T-cell (primary cell): ENCODE measurements at regions of chr15 and their contacts with region 1.

Region 1: DNA sequence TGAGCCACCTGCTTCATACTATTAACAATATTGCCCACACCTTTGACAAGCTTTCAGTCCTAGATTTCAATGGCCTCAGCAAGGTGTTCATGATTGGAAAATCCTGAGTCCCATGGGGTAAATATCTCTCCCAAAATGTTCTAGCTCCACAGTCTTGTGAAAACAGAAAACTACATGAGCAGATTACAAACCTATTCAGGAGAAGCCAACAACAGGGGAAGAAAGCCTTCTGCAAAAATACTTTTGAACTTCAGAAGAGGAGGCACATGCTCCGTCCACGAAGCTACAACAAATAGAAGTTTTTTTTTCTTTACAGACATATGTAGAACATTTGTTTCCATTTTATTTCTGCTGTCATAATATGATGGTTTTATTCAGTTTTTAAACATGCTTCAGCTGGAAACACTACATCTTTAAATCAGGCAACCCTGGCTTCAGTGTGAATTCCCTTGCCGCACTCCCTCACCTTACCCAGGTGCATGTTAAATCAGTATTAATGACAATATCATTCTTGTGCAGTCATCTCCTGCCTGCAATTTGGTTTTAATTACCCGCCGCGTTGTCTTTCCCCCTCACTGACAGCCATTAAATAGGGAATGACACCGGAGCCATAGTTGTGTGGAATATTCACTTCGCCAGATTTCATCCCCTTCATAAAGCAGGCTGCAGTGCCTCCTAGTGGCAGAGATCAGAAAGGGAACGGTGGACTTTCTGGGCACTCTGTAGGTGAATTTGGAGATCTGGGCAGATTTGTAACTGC is 725.5 kb upstream of the ARRDC4 start:
- DNase-seq: peak in 10 of 35 experiments; percentile 1 to 38 (median 5)
- ATAC-seq: no peak
- H3K4me3 ChIP-seq: no peak overlapping the region
- H3K4me3 Mint-ChIP-seq: no peak overlapping the region
- H3K27ac ChIP-seq: no peak overlapping the region
- H3K27ac Mint-ChIP-seq: no peak overlapping the region
- H3K4me1 ChIP-seq: no peaks in the 10 kb centered on the region
- H3K4me1 Mint-ChIP-seq: peaks cover 0 to 2% (median 0%) of the 10 kb centered on the region in 3 donors
- H3K27me3 ChIP-seq: no peaks in the 10 kb centered on the region
- H3K27me3 Mint-ChIP-seq: peaks cover 5 to 7% of the 10 kb centered on the region in 2 donors

Region 2: DNA sequence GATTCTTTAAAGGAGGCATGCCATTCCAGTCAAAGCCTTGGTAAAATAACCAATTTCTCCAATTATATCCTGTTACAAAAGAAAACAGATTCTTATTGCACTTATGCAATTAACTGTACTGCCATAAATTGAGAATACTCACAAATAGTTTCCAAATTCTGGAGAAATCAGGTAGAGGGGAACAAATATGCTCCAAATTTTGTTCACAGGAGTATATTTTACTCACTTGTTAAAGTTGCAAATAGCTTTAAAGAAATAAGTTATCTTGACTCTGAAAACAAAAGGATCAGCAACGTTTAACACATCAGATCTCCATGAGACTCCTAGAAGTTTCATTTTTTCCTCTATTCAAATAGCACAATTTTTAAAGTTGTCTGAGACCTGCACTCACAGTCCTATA is 13.3 kb after region 1 on chr15:
- CTCF ChIA-PET with region 1: no interaction called
- POLR2A ChIA-PET with region 1: interaction called in 1 of 2 experiments, 17 read pairs
- DNase-seq: no peak
- ATAC-seq: no peak
- H3K4me3 ChIP-seq: no peak overlapping the region
- H3K4me3 Mint-ChIP-seq: no peak overlapping the region
- H3K27ac ChIP-seq: no peak overlapping the region
- H3K27ac Mint-ChIP-seq: no peak overlapping the region
- H3K4me1 ChIP-seq: no peaks in the 10 kb centered on the region
- H3K4me1 Mint-ChIP-seq: no peaks in the 10 kb centered on the region
- H3K27me3 ChIP-seq: no peaks in the 10 kb centered on the region
- H3K27me3 Mint-ChIP-seq: no peaks in the 10 kb centered on the region

Region 3: GRCh38 chr15:97301166-97301565 is 66.1 kb after region 1 on chr15:
- CTCF ChIA-PET with region 1: no interaction called
- POLR2A ChIA-PET with region 1: no interaction called
- DNase-seq: no peak
- ATAC-seq: no peak
- H3K4me3 ChIP-seq: no peak overlapping the region
- H3K4me3 Mint-ChIP-seq: no peak overlapping the region
- H3K27ac ChIP-seq: no peak overlapping the region
- H3K27ac Mint-ChIP-seq: no peak overlapping the region
- H3K4me1 ChIP-seq: no peaks in the 10 kb centered on the region
- H3K4me1 Mint-ChIP-seq: no peaks in the 10 kb centered on the region
- H3K27me3 ChIP-seq: no peaks in the 10 kb centered on the region
- H3K27me3 Mint-ChIP-seq: no peaks in the 10 kb centered on the region

Region 4: GRCh38 chr15:97561529-97561928 is 326.5 kb after region 1 on chr15:
- CTCF ChIA-PET with region 1: no interaction called
- POLR2A ChIA-PET with region 1: no interaction called
- DNase-seq: no peak
- ATAC-seq: no peak
- H3K4me3 ChIP-seq: no peak overlapping the region
- H3K4me3 Mint-ChIP-seq: no peak overlapping the region
- H3K27ac ChIP-seq: no peak overlapping the region
- H3K27ac Mint-ChIP-seq: no peak overlapping the region
- H3K4me1 ChIP-seq: no peaks in the 10 kb centered on the region
- H3K4me1 Mint-ChIP-seq: no peaks in the 10 kb centered on the region
- H3K27me3 ChIP-seq: no peaks in the 10 kb centered on the region
- H3K27me3 Mint-ChIP-seq: no peaks in the 10 kb centered on the region

Region 5: GRCh38 chr15:97627634-97628033 is 392.6 kb after region 1 on chr15:
- CTCF ChIA-PET with region 1: no interaction called
- POLR2A ChIA-PET with region 1: no interaction called
- DNase-seq: no peak
- ATAC-seq: no peak
- H3K4me3 ChIP-seq: no peak overlapping the region
- H3K4me3 Mint-ChIP-seq: no peak overlapping the region
- H3K27ac ChIP-seq: no peak overlapping the region
- H3K27ac Mint-ChIP-seq: no peak overlapping the region
- H3K4me1 ChIP-seq: no peaks in the 10 kb centered on the region
- H3K4me1 Mint-ChIP-seq: no peaks in the 10 kb centered on the region
- H3K27me3 ChIP-seq: no peaks in the 10 kb centered on the region
- H3K27me3 Mint-ChIP-seq: no peaks in the 10 kb centered on the region